ENCODE measurements at regions of chr22 and their contacts with region 1.

Region 1: GRCh38 chr22:39490135-39490798 is 11.8 kb upstream of the MIEF1 start:
- DNase-seq: peak; percentile 91
- H3K4me3 ChIP-seq: no peak overlapping the region
- H3K27ac ChIP-seq: no peak overlapping the region
- H3K4me1 ChIP-seq: peaks cover 10% of the 10 kb centered on the region
- H3K27me3 ChIP-seq: no peaks in the 10 kb centered on the region

Region 2: DNA sequence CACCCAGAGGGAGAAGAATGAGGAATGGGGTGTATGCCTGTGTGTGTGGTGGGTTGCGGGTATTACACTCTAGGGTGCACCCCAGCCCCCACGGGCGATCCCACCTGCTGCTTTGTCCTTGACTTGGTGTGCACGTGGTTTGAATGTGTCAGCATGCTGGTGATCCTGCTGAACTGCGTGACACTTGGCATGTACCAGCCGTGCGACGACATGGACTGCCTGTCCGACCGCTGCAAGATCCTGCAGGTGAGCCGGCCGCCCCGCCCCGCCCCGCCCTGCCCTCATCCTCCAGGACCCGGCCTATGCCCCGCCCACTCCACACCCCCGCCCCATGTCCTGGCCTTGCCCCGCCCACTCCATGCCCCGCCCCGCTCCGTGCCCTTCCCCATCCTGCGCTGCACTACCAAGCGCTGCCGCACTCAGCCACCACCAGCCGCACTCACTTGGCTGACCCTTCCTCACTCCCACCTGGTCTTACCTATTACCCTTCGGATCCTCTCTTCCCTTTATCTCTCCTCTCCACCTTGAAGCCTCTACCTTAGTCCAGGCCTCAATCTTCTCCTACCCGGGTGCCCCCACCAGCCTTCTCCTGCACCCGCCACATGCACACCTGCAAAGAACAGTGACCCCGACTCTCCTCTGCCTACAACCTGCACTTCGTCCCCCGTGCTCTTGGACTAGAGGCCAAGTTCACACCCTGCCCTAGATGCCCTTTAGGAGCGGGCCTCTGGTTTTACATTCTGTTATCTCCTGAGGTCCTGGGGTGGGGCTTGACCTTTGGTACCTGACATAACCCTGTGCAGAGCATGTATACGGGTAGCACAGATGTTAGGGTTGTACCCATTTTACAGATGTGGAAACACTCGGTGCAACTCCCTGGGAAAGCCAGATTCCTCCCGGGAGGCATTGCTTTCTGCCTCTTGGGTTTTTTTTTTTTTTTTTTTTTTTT is 108.0 kb after region 1 on chr22:
- in situ Hi-C with region 1: loop called (anchors 25 kb)
- DNase-seq: peak; percentile 25
- H3K4me3 ChIP-seq: no peak overlapping the region
- H3K27ac ChIP-seq: no peak overlapping the region
- H3K4me1 ChIP-seq: no peaks in the 10 kb centered on the region
- H3K27me3 ChIP-seq: peaks cover 20% of the 10 kb centered on the region

Measured in GM23248 (cell line).